ENCODE measurements at regions of chr16 and their contacts with region 1.

Region 1: GRCh38 chr16:49491771-49492761 is 118.5 kb downstream of the C16orf78 start:
- DNase-seq: peak in 1 of 2 donors; percentile 65
- H3K4me3 ChIP-seq: peak overlapping the region; percentile 42 to 62
- H3K27ac ChIP-seq: no peak overlapping the region
- H3K4me1 ChIP-seq: peaks cover 4% of the 10 kb centered on the region in 2 donors
- H3K27me3 ChIP-seq: no peaks in the 10 kb centered on the region
- CTCF ChIP-seq: peak; percentile 82 to 96 (median 95)

Region 2: DNA sequence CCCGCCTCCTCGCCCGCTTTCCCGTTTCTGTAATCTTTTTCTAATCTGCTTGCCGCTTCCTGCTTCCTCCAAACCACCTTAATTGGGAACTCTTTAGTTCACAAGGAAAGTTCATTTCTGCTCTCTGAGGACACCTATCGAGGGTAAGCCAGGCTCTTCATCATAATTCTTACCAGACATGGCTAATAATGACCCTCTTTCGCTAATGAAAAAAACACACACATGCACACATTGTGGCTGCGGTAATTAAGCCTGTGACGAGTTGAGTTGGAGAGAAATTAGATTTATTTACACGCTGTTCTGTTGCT is 263.2 kb after region 1 on chr16:
- intact Hi-C with region 1: loop called (anchors 2 kb)
- DNase-seq: no peak
- H3K4me3 ChIP-seq: peak overlapping the region; percentile 38 to 66
- H3K27ac ChIP-seq: no peak overlapping the region
- H3K4me1 ChIP-seq: peaks cover 0 to 5% of the 10 kb centered on the region in 2 donors
- H3K27me3 ChIP-seq: no peaks in the 10 kb centered on the region
- CTCF ChIP-seq: peak; percentile 12 to 66 (median 45)

Region 3: GRCh38 chr16:49876716-49877129 is 384.7 kb after region 1 on chr16:
- intact Hi-C with region 1: loop called (anchors 5 kb)
- DNase-seq: peak in 1 of 2 donors; percentile 84
- H3K4me3 ChIP-seq: peak overlapping the region; percentile 40 to 61
- H3K27ac ChIP-seq: no peak overlapping the region
- H3K4me1 ChIP-seq: peaks cover 2 to 8% of the 10 kb centered on the region in 2 donors
- H3K27me3 ChIP-seq: no peaks in the 10 kb centered on the region
- CTCF ChIP-seq: peak; percentile 74 to 96 (median 93)

Region 4: GRCh38 chr16:49921791-49922456 is 429.9 kb after region 1 on chr16:
- intact Hi-C with region 1: loop called (anchors 5 kb)
- DNase-seq: peak in 1 of 2 donors; percentile 67
- H3K4me3 ChIP-seq: no peak overlapping the region
- H3K27ac ChIP-seq: no peak overlapping the region
- H3K4me1 ChIP-seq: no peaks in the 10 kb centered on the region
- H3K27me3 ChIP-seq: no peaks in the 10 kb centered on the region
- CTCF ChIP-seq: peak; percentile 44 to 64 (median 57)